Activated B cell treated with CpG ODN at 0.5 μM for 24 hours (primary cell): ENCODE measurements at regions of chr7 and their contacts with region 1.

Region 1: DNA sequence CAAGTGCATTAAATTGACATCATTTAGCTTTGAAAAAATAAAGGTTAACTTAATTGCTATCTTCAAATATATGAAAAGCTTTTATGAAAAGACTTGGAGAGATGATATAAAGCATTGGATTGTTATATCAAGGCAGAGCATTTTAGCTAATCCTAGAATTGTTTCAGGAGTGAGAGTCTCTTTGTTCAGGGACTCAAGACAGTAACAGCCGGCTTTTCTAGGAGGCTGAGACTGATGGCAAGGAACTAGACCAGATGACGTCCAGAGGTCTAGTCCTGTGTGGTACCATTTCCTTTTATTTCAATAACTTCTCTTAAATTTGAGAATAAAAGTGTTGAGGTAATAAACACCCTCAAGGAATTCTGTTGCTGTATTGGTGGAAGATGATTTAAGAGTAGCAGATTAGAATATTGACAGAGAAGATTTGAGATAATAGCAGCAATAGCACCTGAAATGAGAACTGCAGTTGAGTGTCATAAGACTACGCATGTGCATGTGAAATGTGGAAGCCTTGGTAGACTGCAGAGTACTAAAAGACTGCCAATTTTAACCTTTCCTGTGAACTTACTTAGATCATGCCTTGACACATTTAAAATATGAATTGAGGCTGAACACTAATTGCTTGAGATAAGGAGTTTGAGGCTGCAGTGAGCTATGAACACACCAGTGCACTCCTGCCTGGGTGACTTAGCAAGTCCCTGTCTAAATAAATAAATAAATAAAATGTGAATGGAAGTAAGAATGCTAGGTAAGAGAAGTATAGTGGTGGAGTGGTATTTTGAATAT is 79.6 kb downstream of the ZNRF2 start:
- DNase-seq: no peak
- ATAC-seq: peak; percentile 21
- H3K4me3 Mint-ChIP-seq: no peak overlapping the region
- H3K27ac Mint-ChIP-seq: peak overlapping the region; percentile 60
- H3K4me1 Mint-ChIP-seq: peaks cover 28% of the 10 kb centered on the region
- H3K27me3 Mint-ChIP-seq: no peaks in the 10 kb centered on the region
- CTCF ChIP-seq: no peak

Region 2: GRCh38 chr7:30380294-30380693 is 16.3 kb after region 1 on chr7:
- CTCF ChIA-PET with region 1: no interaction called
- POLR2A ChIA-PET with region 1: interaction called, 10 read pairs
- intact Hi-C with region 1: no loop called
- DNase-seq: no peak
- ATAC-seq: no peak
- H3K4me3 Mint-ChIP-seq: no peak overlapping the region
- H3K27ac Mint-ChIP-seq: no peak overlapping the region
- H3K4me1 Mint-ChIP-seq: no peaks in the 10 kb centered on the region
- H3K27me3 Mint-ChIP-seq: no peaks in the 10 kb centered on the region
- CTCF ChIP-seq: no peak

Region 3: GRCh38 chr7:30869794-30870611 is 506.0 kb after region 1 on chr7:
- CTCF ChIA-PET with region 1: no interaction called
- POLR2A ChIA-PET with region 1: no interaction called
- intact Hi-C with region 1: no loop called
- DNase-seq: no peak
- ATAC-seq: no peak
- H3K4me3 Mint-ChIP-seq: no peak overlapping the region
- H3K27ac Mint-ChIP-seq: no peak overlapping the region
- H3K4me1 Mint-ChIP-seq: no peaks in the 10 kb centered on the region
- H3K27me3 Mint-ChIP-seq: no peaks in the 10 kb centered on the region
- CTCF ChIP-seq: no peak